ENCODE measurements at regions of chr15 and their contacts with region 1.

Region 1: DNA sequence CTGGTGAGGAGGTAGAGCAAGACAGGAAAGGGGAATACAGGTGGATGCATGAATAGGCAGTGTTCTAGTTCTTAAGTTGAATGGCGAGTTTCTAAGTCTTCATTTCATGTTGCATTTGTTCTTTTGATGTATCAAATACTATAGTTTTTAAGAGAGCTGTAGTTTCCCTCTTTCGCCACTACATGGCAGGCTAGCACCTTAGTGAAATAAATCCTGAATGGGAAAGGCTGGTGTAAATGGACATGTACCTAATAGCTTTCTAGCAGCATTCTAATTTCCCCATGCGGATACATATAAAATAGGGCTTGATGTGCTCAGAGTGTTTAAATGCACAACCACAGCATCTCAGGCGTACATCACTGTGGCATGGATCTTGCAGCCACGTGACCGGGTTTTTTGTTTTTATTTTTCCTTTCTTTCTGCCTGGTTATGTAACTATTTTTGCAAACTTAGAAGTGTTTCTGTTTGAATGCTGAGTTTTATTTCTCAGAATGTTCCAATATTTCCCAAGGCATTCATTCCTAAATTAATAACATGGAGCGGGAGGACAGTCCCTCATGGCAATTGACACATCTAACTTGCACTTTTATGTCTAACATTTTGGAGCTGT is 23.5 kb upstream of the CLN6 start:
- DNase-seq: peak in 1 of 2 donors; percentile 48
- ATAC-seq: peak in 6 of 8 donors; percentile 25 to 49 (median 41)
- H3K4me3 ChIP-seq: peak overlapping the region in 1 of 10 donors; percentile 8
- H3K27ac ChIP-seq: no peak overlapping the region
- H3K4me1 ChIP-seq: peaks cover 0 to 35% (median 15%) of the 10 kb centered on the region in 9 donors
- H3K27me3 ChIP-seq: no peaks in the 10 kb centered on the region
- CTCF ChIP-seq: peak; percentile 67 to 91 (median 88)

Region 2: GRCh38 chr15:68304589-68305337 is 51.7 kb after region 1 on chr15:
- intact Hi-C with region 1: loop called (anchors 1 to 10 kb)
- DNase-seq: no peak
- ATAC-seq: no peak
- H3K4me3 ChIP-seq: no peak overlapping the region
- H3K27ac ChIP-seq: no peak overlapping the region
- H3K4me1 ChIP-seq: peaks cover under 1 to 26% (median 9%) of the 10 kb centered on the region in 9 donors
- H3K27me3 ChIP-seq: no peaks in the 10 kb centered on the region
- CTCF ChIP-seq: no peak

Region 3: GRCh38 chr15:68383161-68384074 is 130.4 kb after region 1 on chr15:
- intact Hi-C with region 1: loop called in 7 of 10 experiments (anchors 1 to 5 kb)
- DNase-seq: peak in 1 of 2 donors; percentile 46
- ATAC-seq: peak in 6 of 8 donors; percentile 50 to 72 (median 62)
- H3K4me3 ChIP-seq: no peak overlapping the region
- H3K27ac ChIP-seq: no peak overlapping the region
- H3K4me1 ChIP-seq: peaks cover 0 to 11% (median 0%) of the 10 kb centered on the region in 9 donors
- H3K27me3 ChIP-seq: peaks cover 0 to 5% (median 0%) of the 10 kb centered on the region in 7 donors
- CTCF ChIP-seq: peak; percentile 64 to 88 (median 81)

Region 4: DNA sequence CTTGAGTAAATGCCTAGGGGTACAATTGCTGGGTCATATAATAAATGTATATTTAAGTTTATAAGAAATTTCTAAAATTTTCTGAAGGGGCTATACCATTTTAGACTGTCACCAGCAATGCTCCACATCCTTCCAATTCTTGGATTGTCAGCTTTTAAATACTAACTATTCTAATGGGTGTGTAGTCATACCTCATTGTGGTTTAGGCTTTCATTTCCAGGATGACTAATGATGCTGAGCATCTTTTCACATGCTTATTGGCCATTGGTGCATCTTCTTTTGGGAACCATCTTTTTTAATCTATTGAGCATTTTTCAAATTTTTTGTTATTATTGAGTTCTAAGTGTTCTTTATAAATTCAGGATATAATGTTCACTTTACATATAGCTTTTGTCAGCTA is 273.2 kb after region 1 on chr15:
- intact Hi-C with region 1: loop called in 1 of 10 experiments (anchors 10 kb)
- DNase-seq: no peak
- ATAC-seq: no peak
- H3K4me3 ChIP-seq: no peak overlapping the region
- H3K27ac ChIP-seq: no peak overlapping the region
- H3K4me1 ChIP-seq: peaks cover 0 to 16% (median 0%) of the 10 kb centered on the region in 9 donors
- H3K27me3 ChIP-seq: no peaks in the 10 kb centered on the region
- CTCF ChIP-seq: no peak

Region 5: GRCh38 chr15:68550481-68551295 is 297.7 kb after region 1 on chr15:
- intact Hi-C with region 1: loop called in 2 of 10 experiments (anchors 5 to 10 kb)
- DNase-seq: peak; percentile 67 to 72
- ATAC-seq: peak in 7 of 8 donors; percentile 34 to 56 (median 48)
- H3K4me3 ChIP-seq: no peak overlapping the region
- H3K27ac ChIP-seq: no peak overlapping the region
- H3K4me1 ChIP-seq: peaks cover 0 to 11% (median 0%) of the 10 kb centered on the region in 9 donors
- H3K27me3 ChIP-seq: no peaks in the 10 kb centered on the region
- CTCF ChIP-seq: peak; percentile 89 to 96 (median 94)